ENCODE measurements at regions of chr3 and their contacts with region 1.

Region 1: GRCh38 chr3:146065573-146066006 is 95.4 kb downstream of the PLOD2 start:
- DNase-seq: no peak
- H3K4me3 ChIP-seq: no peak overlapping the region
- CTCF ChIP-seq: peak; percentile 36

Region 2: GRCh38 chr3:145776782-145777408 is 288.7 kb before region 1 on chr3:
- CTCF ChIA-PET with region 1: interaction called, 16 read pairs
- POLR2A ChIA-PET with region 1: no interaction called
- DNase-seq: no peak
- H3K4me3 ChIP-seq: no peak overlapping the region
- CTCF ChIP-seq: peak; percentile 58

Region 3: GRCh38 chr3:146052791-146053310 is 12.7 kb before region 1 on chr3:
- CTCF ChIA-PET with region 1: interaction called, 18 read pairs
- POLR2A ChIA-PET with region 1: no interaction called
- DNase-seq: no peak
- H3K4me3 ChIP-seq: no peak overlapping the region
- CTCF ChIP-seq: no peak

Region 4: GRCh38 chr3:146160964-146161662 is 95.5 kb after region 1 on chr3 and contains the start of gene PLOD2:
- CTCF ChIA-PET with region 1: interaction called, 52 read pairs
- POLR2A ChIA-PET with region 1: interaction called, 5 read pairs
- DNase-seq: peak; percentile 83
- H3K4me3 ChIP-seq: peak within 1 kb of the TSS; percentile 93
- CTCF ChIP-seq: no peak

Region 5: GRCh38 chr3:146177519-146177918 is 111.9 kb after region 1 on chr3:
- CTCF ChIA-PET with region 1: interaction called, 23 read pairs
- POLR2A ChIA-PET with region 1: no interaction called
- DNase-seq: no peak
- H3K4me3 ChIP-seq: no peak overlapping the region
- CTCF ChIP-seq: no peak

Region 6: DNA sequence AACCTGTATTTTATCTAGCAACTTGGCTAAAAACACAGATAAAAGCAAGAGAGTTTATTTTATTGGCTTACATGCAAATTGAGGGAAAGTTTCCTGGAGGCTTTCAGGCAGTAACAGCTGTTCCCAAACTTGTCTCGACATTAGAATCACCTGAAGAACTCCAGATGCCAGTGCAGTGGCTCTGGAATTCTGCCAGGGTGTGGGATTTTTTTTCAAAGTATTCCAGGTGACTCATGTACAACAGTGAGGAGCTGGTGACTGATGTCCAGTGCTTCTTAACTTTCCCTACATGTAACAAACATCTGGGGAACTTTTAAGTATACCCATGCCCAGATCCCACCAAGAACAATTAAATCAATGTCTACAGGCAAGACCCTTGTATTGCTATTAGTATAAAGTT is 119.0 kb after region 1 on chr3:
- CTCF ChIA-PET with region 1: interaction called, 203 read pairs
- POLR2A ChIA-PET with region 1: interaction called, 3 read pairs
- DNase-seq: no peak
- H3K4me3 ChIP-seq: no peak overlapping the region
- CTCF ChIP-seq: no peak

Measured in AG04449 (cell line).